ENCODE measurements at regions of chr7 and their contacts with region 1.

Region 1: DNA sequence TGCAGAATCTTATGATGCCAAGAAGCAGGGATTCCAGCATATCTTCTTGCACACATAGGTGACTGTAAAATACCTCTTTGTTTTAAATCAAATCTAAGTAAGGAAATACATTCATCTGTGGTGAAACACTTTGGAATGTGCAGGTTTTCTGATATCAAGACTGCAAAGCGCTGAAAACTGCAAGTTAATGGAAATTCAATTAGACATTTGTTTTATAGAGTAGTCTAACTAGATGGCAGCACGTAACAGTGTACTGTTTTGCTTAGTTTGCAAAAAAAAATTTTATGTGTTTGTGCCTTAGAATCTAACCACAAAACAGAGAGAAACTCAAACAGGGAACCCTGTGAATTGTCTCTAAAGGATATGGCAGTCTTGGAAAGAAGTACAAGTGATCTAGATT is 259.2 kb downstream of the HDAC9 start:
- DNase-seq: peak; percentile 18
- H3K4me3 ChIP-seq: no peak overlapping the region
- CTCF ChIP-seq: no peak

Region 2: DNA sequence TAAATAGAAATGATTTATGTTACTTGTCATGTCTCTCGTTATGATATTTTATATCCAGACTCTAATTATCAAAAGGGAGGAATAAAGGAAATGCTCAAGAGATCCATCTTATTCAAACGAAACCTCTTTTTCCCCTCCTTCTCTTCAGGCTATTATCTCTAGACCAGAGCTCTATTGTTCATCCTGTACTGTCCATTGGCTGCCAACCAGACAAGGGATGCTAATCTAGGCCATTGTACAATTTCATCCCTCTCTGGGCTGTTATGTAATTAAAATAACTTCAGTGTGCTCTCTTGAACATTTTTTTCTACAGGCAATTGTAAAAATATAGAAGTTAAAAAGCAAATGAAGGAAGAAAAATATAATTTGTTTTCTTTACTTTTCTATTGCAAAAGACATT is 38.8 kb before region 1 on chr7:
- in situ Hi-C with region 1: no loop called
- DNase-seq: no peak
- H3K4me3 ChIP-seq: no peak overlapping the region
- CTCF ChIP-seq: no peak

Region 3: GRCh38 chr7:18815261-18815960 is 60.6 kb after region 1 on chr7:
- in situ Hi-C with region 1: no loop called
- DNase-seq: no peak
- H3K4me3 ChIP-seq: no peak overlapping the region
- CTCF ChIP-seq: no peak

Region 4: GRCh38 chr7:18829858-18830285 is 75.1 kb after region 1 on chr7:
- in situ Hi-C with region 1: loop called (anchors 5 kb)
- DNase-seq: peak; percentile 37
- H3K4me3 ChIP-seq: no peak overlapping the region
- CTCF ChIP-seq: no peak

Measured in astrocyte of the cerebellum (primary cell).